Activated CD4-positive, alpha-beta T cell treated with anti-CD3 and anti-CD28 coated beads, Interleukin-2, amount 10 ng/mL, durations not matched to agents 24 days and 14 days (primary cell): ENCODE measurements at regions of chr19 and their contacts with region 1.

Region 1: GRCh38 chr19:29610563-29611271 is 4.6 kb downstream of the POP4 start:
- DNase-seq: peak; percentile 96
- H3K4me3 Mint-ChIP-seq: no peak overlapping the region
- H3K27ac Mint-ChIP-seq: peak overlapping the region; percentile 77
- H3K4me1 Mint-ChIP-seq: peaks cover 22% of the 10 kb centered on the region
- H3K27me3 Mint-ChIP-seq: peaks cover 2% of the 10 kb centered on the region

Region 2: DNA sequence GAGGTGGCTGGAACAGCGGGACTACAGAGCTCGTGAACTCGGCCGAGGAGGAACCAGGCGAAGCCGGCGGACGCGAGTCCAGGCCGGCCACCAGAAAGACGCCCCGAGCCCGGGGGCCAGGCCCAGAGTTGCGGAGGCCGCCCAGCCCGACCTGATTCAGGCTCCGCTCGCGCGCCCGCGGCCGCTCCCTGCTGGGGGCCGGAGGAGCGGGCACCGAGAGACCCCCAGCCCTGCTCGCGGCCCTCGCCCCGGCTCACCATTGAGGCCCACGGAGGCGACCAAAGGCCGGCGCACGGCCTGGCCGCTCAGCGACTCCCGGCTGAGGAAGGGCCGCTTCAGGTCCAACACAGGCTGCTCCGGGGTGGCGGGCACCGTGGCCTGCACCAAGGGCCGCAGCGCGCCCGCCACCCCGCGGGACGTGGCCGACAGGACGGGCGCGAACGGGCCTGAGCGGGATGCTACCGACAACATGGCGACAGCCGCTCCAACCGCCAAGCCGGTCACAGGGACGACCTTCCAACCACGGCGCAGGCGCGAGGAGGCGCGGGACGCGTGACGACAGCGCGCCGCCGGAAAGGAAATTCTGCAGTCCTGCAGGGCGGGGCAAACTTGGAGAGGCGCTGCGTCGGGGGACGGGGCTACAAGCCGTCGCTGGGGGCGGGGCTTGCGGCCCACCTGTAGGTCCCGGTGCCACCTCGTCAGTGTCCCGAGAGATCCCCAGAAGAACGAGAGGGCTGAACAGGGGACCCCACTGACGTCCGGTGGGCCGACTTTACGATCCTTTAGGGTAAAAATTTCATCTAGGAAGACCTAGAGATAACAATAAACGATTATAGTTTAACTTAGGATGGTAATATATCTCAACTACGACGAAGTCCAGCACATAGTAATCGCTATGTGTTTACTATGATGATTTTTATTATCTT is 397.8 kb before region 1 on chr19 and contains the start of gene UQCRFS1:
- intact Hi-C with region 1: loop called (anchors 5 kb)
- DNase-seq: peak; percentile 99
- H3K4me3 Mint-ChIP-seq: peak within 1 kb of the TSS; percentile 96
- H3K27ac Mint-ChIP-seq: peak within 1 kb of the TSS; percentile 97
- H3K4me1 Mint-ChIP-seq: peaks cover 38% of the 10 kb centered on the region
- H3K27me3 Mint-ChIP-seq: peaks cover 5% of the 10 kb centered on the region
- total RNA-seq, gene UQCRFS1: 44.5 and 45.4 TPM in 2 replicates

Region 3: GRCh38 chr19:29546583-29547190 is 64.0 kb before region 1 on chr19:
- intact Hi-C with region 1: no loop called
- DNase-seq: no peak
- H3K4me3 Mint-ChIP-seq: no peak overlapping the region
- H3K27ac Mint-ChIP-seq: no peak overlapping the region
- H3K4me1 Mint-ChIP-seq: no peaks in the 10 kb centered on the region
- H3K27me3 Mint-ChIP-seq: peaks cover 9% of the 10 kb centered on the region

Region 4: GRCh38 chr19:29579308-29579910 is 31.3 kb before region 1 on chr19:
- intact Hi-C with region 1: no loop called
- DNase-seq: no peak
- H3K4me3 Mint-ChIP-seq: no peak overlapping the region
- H3K27ac Mint-ChIP-seq: no peak overlapping the region
- H3K4me1 Mint-ChIP-seq: peaks cover 34% of the 10 kb centered on the region
- H3K27me3 Mint-ChIP-seq: peaks cover 21% of the 10 kb centered on the region

Region 5: DNA sequence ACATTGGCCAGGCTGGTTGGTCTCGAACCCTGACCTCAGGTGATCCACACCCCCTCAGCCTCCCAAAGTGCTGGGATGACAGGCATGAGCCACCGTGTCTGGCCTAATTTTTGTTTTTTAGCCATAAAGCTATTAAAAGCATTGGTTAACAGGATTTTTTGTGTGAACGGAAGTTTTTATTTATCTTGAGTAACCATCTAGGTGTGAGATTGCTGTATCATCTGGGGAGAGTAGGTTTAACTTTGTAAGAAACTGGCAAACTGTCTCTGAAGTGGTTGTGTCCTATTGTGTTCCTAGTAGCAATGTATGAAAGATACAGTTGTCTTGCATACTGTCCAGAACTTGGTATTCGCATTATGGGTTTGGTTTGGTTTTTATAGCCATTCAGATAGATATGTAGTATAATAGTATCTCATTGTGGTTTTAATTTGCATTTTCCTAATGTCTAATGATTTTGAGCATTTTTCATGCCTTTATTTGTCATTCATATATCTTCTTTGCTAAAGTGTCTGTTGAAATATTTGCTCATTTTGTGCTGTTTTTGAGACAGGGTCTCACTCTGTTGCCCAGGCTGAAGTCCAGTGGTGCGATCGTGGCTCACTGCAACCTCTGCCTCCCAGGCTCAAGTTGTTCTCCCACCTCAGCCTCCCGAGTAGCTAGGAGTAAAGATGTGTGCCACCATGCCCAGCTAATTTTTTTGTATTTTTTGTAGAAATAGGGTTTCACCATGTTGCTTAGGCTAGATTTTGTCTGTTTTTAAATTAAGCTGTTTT is 41.1 kb after region 1 on chr19:
- intact Hi-C with region 1: no loop called
- DNase-seq: no peak
- H3K4me3 Mint-ChIP-seq: no peak overlapping the region
- H3K27ac Mint-ChIP-seq: no peak overlapping the region
- H3K4me1 Mint-ChIP-seq: peaks cover 7% of the 10 kb centered on the region
- H3K27me3 Mint-ChIP-seq: peaks cover 26% of the 10 kb centered on the region

Region 6: DNA sequence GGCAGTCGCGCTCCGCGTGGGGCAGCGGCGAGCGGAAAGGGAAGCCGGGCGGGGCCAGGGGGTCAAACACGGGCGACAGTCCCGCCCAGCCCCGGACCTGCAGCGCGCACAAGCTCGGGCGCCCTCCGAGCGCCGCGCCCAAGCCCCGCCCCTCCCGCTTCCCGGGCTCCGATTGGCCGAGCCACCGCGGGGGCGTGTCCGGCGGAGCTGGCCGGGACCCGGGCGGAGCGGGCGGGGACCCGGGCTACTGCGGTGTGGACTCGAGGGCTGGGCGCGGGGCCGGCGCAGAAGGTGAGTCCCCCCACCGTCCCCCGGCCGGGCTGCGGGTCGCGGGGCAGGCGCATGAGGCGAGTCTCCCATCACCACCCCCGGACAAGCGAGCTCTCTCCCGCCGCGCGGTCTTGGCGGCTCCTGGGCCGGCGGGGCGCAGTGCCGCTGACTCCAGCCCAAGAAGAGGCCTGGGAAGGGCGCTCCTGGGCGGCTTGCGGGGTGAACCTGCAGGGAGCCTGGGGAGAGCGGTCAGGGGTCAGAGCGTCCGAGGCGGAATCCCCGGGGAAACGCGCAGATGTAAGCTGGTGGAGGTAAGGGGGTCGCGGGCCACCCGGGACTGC is 54.6 kb after region 1 on chr19 and contains the start of gene PLEKHF1:
- intact Hi-C with region 1: loop called (anchors 1 kb)
- DNase-seq: peak; percentile 99
- H3K4me3 Mint-ChIP-seq: peak within 1 kb of the TSS; percentile 95
- H3K27ac Mint-ChIP-seq: peak within 1 kb of the TSS; percentile 94
- H3K4me1 Mint-ChIP-seq: peaks cover 63% of the 10 kb centered on the region
- H3K27me3 Mint-ChIP-seq: no peaks in the 10 kb centered on the region
- total RNA-seq, gene PLEKHF1: 24.0 and 26.7 TPM in 2 replicates

Region 7: GRCh38 chr19:29714953-29715700 is 104.4 kb after region 1 on chr19 and contains the start of gene C19orf12:
- intact Hi-C with region 1: loop called (anchors 1 kb)
- DNase-seq: peak; percentile 92
- H3K4me3 Mint-ChIP-seq: peak within 1 kb of the TSS; percentile 93
- H3K27ac Mint-ChIP-seq: peak within 1 kb of the TSS; percentile 99
- H3K4me1 Mint-ChIP-seq: peaks cover 53% of the 10 kb centered on the region
- H3K27me3 Mint-ChIP-seq: peaks cover under 1% of the 10 kb centered on the region
- total RNA-seq, gene C19orf12: 41.4 and 41.6 TPM in 2 replicates

Region 8: GRCh38 chr19:29735800-29736199 is 125.1 kb after region 1 on chr19:
- intact Hi-C with region 1: no loop called
- DNase-seq: no peak
- H3K4me3 Mint-ChIP-seq: no peak overlapping the region
- H3K27ac Mint-ChIP-seq: no peak overlapping the region
- H3K4me1 Mint-ChIP-seq: no peaks in the 10 kb centered on the region
- H3K27me3 Mint-ChIP-seq: peaks cover 13% of the 10 kb centered on the region

Region 9: DNA sequence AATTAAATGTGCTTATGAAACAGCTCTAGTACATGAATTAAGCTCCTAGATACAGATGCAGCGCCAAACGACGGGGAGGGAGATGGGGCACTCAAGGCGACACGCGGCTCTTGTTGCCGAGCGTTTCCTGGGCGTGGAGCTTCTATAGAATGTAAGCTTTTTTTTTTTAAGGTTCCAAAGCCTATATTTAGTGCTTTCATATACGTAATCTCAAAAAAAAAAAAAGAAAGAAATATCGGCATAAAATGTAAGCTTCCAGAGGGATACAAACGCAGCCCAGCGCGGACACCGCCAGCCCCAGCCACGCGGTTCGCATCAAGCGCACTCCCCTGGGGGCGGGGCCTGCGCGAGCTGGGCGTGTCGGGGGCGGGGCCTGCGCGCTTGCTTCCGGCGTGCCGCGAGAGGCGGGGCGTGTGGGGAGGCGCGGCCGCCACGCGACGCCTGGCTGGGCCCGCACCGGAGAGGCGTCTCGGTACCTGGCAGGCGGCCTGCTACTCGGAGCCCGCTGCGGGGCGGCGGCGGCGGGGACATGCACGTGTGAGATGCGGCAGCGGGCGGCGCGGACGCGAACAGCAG is 331.2 kb after region 1 on chr19 and contains the start of gene URI1:
- intact Hi-C with region 1: loop called (anchors 10 kb)
- DNase-seq: peak; percentile 99
- H3K4me3 Mint-ChIP-seq: peak within 1 kb of the TSS; percentile 88
- H3K27ac Mint-ChIP-seq: peak within 1 kb of the TSS; percentile 91
- H3K4me1 Mint-ChIP-seq: peaks cover 27% of the 10 kb centered on the region
- H3K27me3 Mint-ChIP-seq: peaks cover 3% of the 10 kb centered on the region
- total RNA-seq, gene URI1: 60.0 and 64.3 TPM in 2 replicates